Posterior vena cava (tissue), 2 donors: ENCODE measurements at regions of chr11 and their contacts with region 1.

Region 1: GRCh38 chr11:10233581-10233980 is 60.4 kb downstream of the SBF2 start:
- DNase-seq: no peak

Region 2: DNA sequence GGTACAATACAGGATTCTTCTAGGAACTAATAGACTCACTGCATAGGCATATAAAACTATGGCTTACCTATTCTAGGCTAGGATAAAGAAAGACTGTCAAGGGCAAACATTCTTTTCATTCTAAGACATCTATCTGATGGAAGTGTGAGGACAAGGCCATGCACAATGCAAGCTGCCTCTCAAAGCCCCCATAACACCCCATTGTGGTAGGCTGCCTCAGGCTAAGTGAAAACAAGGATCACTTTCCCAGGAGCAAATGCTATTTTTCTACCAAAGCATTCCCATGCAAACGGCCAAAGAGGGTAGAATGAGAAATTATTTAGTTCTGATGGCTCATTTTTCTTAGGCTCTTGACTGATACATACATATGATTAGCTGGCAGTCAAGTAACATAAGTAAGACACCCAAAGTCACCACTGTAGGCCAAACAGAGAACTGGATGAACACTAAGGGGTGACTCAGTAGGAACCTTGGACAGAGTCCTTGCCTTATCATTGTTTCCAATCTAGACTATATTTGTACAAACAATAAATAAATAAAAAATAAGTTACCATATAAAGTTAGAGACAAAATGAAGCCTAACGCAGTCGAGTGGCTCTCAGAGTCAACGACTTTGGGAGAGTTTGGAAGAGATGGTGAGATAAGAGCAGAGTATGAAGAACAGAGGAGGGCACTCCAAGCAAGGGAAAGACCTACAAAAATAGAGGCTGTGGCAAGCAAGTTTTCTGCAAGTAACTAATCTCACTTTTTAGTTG is 243.2 kb before region 1 on chr11:
- intact Hi-C with region 1: no loop called
- DNase-seq: no peak

Region 3: DNA sequence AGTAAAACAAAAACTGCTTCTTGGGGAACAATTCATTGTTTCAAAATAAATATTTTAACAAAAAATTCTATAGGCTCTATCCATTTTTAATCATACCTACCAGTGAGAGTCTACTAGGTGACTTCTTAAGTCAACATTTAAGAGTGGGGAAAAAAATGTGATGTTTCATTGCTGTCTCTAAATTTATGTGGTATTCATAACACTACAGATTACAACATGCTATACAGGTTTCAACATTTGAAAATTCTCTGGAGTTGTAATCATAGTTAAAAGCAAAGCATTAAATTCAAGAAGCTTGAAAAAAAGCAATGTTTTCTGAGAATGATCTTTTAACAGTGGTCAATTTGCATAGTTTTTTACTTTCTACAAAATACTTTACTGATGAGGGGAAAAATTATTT is 42.1 kb after region 1 on chr11:
- intact Hi-C with region 1: loop called in 1 of 2 experiments (anchors 5 kb)
- DNase-seq: no peak